Endothelial cell of umbilical vein (primary cell): ENCODE measurements at regions of chr2 and their contacts with region 1.

Region 1: DNA sequence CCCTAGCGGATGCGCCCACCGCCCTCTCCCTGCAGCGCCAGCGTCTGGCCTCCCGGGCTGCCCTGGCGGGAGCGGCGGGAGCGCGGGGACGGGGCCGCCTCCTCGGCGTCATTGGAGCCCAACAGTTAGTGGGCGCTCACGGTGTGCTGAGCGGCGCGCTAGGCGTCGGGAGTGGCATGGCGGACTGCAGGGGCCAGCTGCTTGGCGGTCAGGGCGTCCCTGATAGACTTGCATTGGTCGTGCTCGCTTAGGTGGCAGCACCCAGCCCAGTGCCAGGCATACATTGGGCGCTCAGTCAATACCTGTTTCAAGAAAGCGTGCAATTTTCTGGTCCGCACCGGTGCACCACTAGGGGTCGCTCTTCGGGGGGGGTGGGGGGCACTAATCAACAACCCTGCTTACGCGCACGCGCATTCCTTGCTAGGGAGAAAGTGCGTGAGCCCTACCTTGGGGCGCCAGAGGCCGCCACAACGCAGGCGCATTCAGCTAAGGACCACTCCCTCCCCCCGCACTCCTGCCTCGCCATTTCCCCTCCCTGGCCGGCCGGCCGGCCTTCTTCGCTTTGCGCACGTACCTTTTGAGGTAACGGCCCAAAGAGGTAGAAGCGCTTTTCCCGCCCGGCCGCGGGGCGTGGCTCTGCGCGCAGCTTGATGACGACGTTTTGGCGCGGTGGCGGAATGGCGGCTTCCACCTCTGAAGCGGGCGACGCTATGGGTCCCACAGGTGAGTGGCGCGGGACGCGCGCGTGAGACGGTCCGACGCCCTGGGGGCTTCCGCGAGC is 411 bp upstream of the MZT2A start:
- DNase-seq: peak; percentile 93
- H3K4me3 ChIP-seq: peak overlapping the region; percentile 64 to 73 (median 73)
- H3K27ac ChIP-seq: peak overlapping the region; percentile 69
- H3K4me1 ChIP-seq: peaks cover 11% of the 10 kb centered on the region
- H3K27me3 ChIP-seq: no peaks in the 10 kb centered on the region
- CTCF ChIP-seq: peak; percentile 58 to 79
- POLR2A ChIP-seq: no peak

Region 2: DNA sequence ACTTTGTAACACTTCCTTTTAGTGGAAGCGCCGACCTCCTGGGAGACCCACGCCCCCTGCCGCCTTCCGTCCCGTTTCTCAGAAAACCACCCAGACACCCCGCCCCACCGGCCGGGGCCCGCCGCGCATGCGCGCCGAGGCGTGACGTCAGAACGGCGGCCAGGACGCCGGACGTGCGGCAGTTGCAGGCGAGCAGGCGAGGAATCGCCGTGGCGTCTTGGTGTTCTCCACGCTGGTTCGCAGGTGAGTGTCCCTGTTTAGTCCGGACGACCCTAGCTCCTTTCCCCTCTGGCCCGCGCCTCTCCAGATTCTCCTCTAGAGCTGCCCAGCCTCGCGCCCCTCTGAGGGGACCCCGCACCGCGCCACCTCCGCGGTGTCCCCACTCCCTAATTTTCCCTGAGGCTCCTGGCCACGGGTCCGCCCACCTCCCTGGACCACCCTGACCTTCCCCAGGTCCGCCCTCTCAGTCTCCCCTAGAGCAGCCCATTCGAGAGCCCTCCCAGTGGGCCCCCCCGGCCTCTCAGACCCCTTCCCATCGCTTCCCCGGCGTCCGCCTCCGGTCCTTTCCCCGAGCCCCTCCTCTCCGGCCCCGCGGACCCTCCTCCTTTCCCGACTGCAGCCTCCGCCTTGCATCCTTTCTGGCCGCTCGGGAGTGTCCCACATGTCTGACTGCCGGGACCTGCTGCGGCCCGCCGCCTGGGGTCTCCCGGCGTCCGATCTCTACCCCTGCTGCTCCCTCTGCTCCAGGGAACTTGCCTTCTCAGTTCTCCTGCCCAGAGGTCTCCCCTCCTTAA is 387.3 kb before region 1 on chr2 and contains the start of gene PLEKHB2:
- CTCF ChIA-PET with region 1: no interaction called
- POLR2A ChIA-PET with region 1: no interaction called
- dilution Hi-C with region 1: no loop called
- intact Hi-C with region 1: loop called (anchors 5 kb)
- DNase-seq: peak; percentile 93
- H3K4me3 ChIP-seq: peak within 1 kb of the TSS; percentile 86 to 99 (median 98)
- H3K27ac ChIP-seq: peak within 1 kb of the TSS; percentile 86
- H3K4me1 ChIP-seq: peaks cover 21% of the 10 kb centered on the region
- H3K27me3 ChIP-seq: no peaks in the 10 kb centered on the region
- CTCF ChIP-seq: peak in 1 of 2 donors; percentile 30
- POLR2A ChIP-seq: peak; percentile 93
- total RNA-seq, gene PLEKHB2: 56.5 and 56.9 TPM in 2 replicates

Region 3: GRCh38 chr2:131413148-131413747 is 79.4 kb before region 1 on chr2:
- CTCF ChIA-PET with region 1: interaction called, 12 read pairs
- POLR2A ChIA-PET with region 1: no interaction called
- dilution Hi-C with region 1: no loop called
- intact Hi-C with region 1: loop called (anchors 1 kb)
- DNase-seq: peak; percentile 79
- H3K4me3 ChIP-seq: no peak overlapping the region
- H3K27ac ChIP-seq: no peak overlapping the region
- H3K4me1 ChIP-seq: no peaks in the 10 kb centered on the region
- H3K27me3 ChIP-seq: peaks cover 17 to 25% of the 10 kb centered on the region in 2 experiments
- CTCF ChIP-seq: peak; percentile 42 to 50
- POLR2A ChIP-seq: no peak

Region 4: DNA sequence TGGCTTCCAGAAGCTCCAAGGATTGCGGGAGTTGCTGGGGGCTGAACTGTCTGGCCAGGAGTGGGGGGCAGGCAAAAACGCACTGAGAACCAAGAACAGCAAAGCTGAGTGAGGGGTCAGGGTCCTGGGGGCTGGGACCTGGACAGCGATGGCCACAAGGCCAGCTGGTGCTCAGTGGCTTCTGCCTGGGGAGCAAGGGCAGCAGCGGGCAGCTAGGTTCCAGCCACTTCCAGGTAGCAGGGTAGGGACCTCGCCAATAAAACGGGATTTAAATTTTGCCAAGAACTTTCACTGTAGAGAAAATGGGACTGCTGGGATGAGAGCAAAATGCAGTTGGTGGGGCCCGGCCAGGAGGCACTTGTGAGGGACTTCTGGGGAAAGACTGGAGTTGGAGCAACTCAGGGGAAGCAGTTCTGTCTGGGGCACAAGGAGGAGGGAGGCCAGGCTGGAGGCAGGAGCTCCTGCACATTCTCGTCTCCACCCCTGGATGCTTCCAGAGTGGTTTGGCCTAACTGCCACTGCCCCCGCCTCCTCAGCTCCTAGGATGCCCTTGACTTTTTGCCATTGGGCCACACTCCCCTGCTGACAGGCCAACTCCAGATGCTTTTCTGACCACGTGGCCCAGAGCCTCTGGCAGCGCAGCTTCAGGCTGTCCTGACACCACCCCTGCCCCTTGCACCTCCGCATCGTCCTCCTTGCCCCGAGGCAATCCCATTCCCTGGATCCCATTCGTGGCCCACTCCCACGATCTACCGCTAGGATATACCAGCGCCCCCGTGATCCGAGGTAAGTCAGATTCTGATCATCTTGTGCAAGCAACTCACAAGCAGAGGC is 29.6 kb after region 1 on chr2:
- CTCF ChIA-PET with region 1: interaction called, 3 read pairs
- POLR2A ChIA-PET with region 1: interaction called, 5 read pairs
- dilution Hi-C with region 1: no loop called
- intact Hi-C with region 1: loop called (anchors 5 kb)
- DNase-seq: no peak
- H3K4me3 ChIP-seq: no peak overlapping the region
- H3K27ac ChIP-seq: no peak overlapping the region
- H3K4me1 ChIP-seq: no peaks in the 10 kb centered on the region
- H3K27me3 ChIP-seq: no peaks in the 10 kb centered on the region
- CTCF ChIP-seq: no peak
- POLR2A ChIP-seq: no peak

Region 5: DNA sequence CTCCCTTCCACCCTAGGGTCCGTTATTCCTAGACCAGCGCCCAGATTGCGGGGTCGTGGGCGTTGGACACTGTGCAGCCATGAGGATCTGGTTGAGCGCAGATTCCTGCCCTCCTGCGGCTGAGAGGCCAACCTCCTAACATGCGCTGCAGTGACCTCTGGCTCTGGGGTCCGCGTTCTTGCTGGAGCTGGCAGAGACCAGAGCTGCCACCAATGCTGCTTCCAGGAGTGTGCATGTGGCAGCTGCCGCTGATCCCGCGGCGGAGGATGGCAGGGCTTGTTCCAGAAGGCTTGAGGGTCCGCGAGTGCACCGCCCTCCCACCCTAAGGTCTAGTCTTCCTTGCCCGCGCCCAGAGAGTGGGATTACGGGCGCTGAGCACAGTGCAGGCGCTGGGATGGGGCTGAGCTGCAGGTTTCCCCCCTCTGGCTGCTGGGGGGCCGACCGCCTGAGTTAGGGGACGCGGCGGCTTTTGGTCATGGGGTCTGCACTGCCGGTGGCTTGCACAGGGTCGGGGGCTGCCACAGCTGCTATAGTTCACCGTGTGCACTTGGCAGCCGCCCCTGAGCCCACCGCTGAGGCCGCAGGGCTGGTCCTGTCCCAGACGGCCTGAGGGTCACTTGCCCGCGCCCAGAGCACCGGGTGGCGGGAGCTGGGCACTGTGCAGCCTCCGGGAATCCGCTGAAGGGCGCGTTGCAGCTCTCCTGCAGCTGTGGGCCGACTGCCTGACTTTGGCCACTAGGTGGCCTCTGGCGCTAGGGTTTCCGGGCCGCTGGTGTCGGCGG is 181.0 kb after region 1 on chr2:
- CTCF ChIA-PET with region 1: interaction called, 11 read pairs
- POLR2A ChIA-PET with region 1: no interaction called
- dilution Hi-C with region 1: no loop called
- intact Hi-C with region 1: loop called (anchors 1 kb)
- DNase-seq: peak; percentile 67
- H3K4me3 ChIP-seq: peak overlapping the region in 2 of 3 experiments; percentile 15 to 25
- H3K27ac ChIP-seq: no peak overlapping the region
- H3K4me1 ChIP-seq: peaks cover 22% of the 10 kb centered on the region
- H3K27me3 ChIP-seq: no peaks in the 10 kb centered on the region
- CTCF ChIP-seq: peak; percentile 77 to 91
- POLR2A ChIP-seq: no peak